CD4-positive, alpha-beta T cell (primary cell): ENCODE measurements at regions of chr12 and their contacts with region 1.

Region 1: GRCh38 chr12:116955382-116956021 is 44.8 kb downstream of the FBXW8 start:
- DNase-seq: peak in 6 of 14 experiments; percentile 1 to 69 (median 38)
- ATAC-seq: peak; percentile 62
- H3K4me3 ChIP-seq: no peak overlapping the region
- H3K4me3 Mint-ChIP-seq: no peak overlapping the region
- H3K27ac ChIP-seq: no peak overlapping the region
- H3K27ac Mint-ChIP-seq: no peak overlapping the region
- H3K4me1 ChIP-seq: peaks cover 3% of the 10 kb centered on the region
- H3K4me1 Mint-ChIP-seq: peaks cover 12% of the 10 kb centered on the region
- H3K27me3 ChIP-seq: no peaks in the 10 kb centered on the region
- H3K27me3 Mint-ChIP-seq: no peaks in the 10 kb centered on the region
- CTCF ChIP-seq: no peak

Region 2: GRCh38 chr12:116759783-116760621 is 195.5 kb before region 1 on chr12:
- CTCF ChIA-PET with region 1: no interaction called
- POLR2A ChIA-PET with region 1: no interaction called
- intact Hi-C with region 1: loop called in 1 of 2 experiments (anchors 5 kb)
- DNase-seq: peak in 13 of 14 experiments; percentile 3 to 46 (median 15)
- ATAC-seq: peak; percentile 56
- H3K4me3 ChIP-seq: no peak overlapping the region
- H3K4me3 Mint-ChIP-seq: peak overlapping the region; percentile 60
- H3K27ac ChIP-seq: no peak overlapping the region
- H3K27ac Mint-ChIP-seq: no peak overlapping the region
- H3K4me1 ChIP-seq: no peaks in the 10 kb centered on the region
- H3K4me1 Mint-ChIP-seq: peaks cover 4% of the 10 kb centered on the region
- H3K27me3 ChIP-seq: no peaks in the 10 kb centered on the region
- H3K27me3 Mint-ChIP-seq: no peaks in the 10 kb centered on the region
- CTCF ChIP-seq: no peak

Region 3: GRCh38 chr12:116924558-116925453 is 30.7 kb before region 1 on chr12:
- CTCF ChIA-PET with region 1: no interaction called
- POLR2A ChIA-PET with region 1: no interaction called
- intact Hi-C with region 1: no loop called
- DNase-seq: peak in 13 of 14 experiments; percentile 10 to 94 (median 41)
- ATAC-seq: peak; percentile 92
- H3K4me3 ChIP-seq: no peak overlapping the region
- H3K4me3 Mint-ChIP-seq: peak overlapping the region; percentile 77
- H3K27ac ChIP-seq: peak overlapping the region; percentile 9 to 13
- H3K27ac Mint-ChIP-seq: peak overlapping the region; percentile 72
- H3K4me1 ChIP-seq: peaks cover 41% of the 10 kb centered on the region
- H3K4me1 Mint-ChIP-seq: peaks cover 70% of the 10 kb centered on the region
- H3K27me3 ChIP-seq: no peaks in the 10 kb centered on the region
- H3K27me3 Mint-ChIP-seq: no peaks in the 10 kb centered on the region
- CTCF ChIP-seq: no peak

Region 4: DNA sequence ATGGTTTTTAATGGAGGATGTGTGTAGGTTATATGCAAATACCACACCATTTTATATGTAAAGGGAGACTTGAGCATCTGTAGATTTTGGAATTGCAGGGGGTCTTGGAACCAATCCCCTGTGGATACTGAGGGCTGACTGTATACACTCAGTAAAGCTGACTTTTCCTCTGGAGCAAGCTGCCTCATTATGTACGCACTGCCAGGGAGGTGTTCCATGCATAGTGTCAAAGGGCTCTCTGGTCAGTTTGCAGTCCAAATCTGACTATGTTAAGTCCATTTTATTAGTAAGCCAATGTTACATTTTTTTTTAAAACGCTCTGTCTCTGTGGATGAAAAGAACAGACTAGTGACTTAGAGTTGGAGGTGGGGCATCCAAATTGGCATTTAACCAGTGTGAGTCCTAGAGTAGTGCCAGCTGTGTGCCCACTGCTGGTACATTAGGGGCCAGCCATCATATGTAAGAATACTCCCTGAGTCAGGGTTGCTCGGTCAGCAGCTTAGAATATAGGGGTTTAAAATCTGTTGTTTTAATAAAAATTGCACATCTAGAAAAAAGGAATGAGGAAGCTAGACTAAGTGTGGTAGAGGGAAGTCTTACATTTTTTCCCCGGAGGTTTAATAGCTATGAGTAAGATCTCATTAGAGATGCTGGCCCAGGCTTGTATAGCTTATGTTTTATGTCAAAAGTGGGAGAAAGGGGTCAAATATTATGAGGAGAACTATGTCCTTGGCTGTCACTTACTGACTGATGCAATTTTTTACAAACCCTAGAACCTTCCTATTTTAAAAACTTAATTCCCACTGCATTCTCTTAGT is 56.7 kb after region 1 on chr12:
- CTCF ChIA-PET with region 1: no interaction called
- POLR2A ChIA-PET with region 1: no interaction called
- intact Hi-C with region 1: no loop called
- DNase-seq: no peak
- ATAC-seq: no peak
- H3K4me3 ChIP-seq: no peak overlapping the region
- H3K4me3 Mint-ChIP-seq: no peak overlapping the region
- H3K27ac ChIP-seq: no peak overlapping the region
- H3K27ac Mint-ChIP-seq: no peak overlapping the region
- H3K4me1 ChIP-seq: no peaks in the 10 kb centered on the region
- H3K4me1 Mint-ChIP-seq: no peaks in the 10 kb centered on the region
- H3K27me3 ChIP-seq: no peaks in the 10 kb centered on the region
- H3K27me3 Mint-ChIP-seq: no peaks in the 10 kb centered on the region
- CTCF ChIP-seq: no peak

Region 5: GRCh38 chr12:117125275-117125613 is 169.7 kb after region 1 on chr12:
- CTCF ChIA-PET with region 1: no interaction called
- POLR2A ChIA-PET with region 1: no interaction called
- intact Hi-C with region 1: no loop called
- DNase-seq: no peak
- ATAC-seq: no peak
- H3K4me3 ChIP-seq: no peak overlapping the region
- H3K4me3 Mint-ChIP-seq: no peak overlapping the region
- H3K27ac ChIP-seq: no peak overlapping the region
- H3K27ac Mint-ChIP-seq: no peak overlapping the region
- H3K4me1 ChIP-seq: no peaks in the 10 kb centered on the region
- H3K4me1 Mint-ChIP-seq: no peaks in the 10 kb centered on the region
- H3K27me3 ChIP-seq: no peaks in the 10 kb centered on the region
- H3K27me3 Mint-ChIP-seq: no peaks in the 10 kb centered on the region
- CTCF ChIP-seq: no peak